HEK293T (cell line): ENCODE measurements at regions of chr15 and their contacts with region 1.

Region 1: GRCh38 chr15:69452692-69453521 is at the start of gene RPLP1:
- DNase-seq: peak; percentile 93

Region 2: DNA sequence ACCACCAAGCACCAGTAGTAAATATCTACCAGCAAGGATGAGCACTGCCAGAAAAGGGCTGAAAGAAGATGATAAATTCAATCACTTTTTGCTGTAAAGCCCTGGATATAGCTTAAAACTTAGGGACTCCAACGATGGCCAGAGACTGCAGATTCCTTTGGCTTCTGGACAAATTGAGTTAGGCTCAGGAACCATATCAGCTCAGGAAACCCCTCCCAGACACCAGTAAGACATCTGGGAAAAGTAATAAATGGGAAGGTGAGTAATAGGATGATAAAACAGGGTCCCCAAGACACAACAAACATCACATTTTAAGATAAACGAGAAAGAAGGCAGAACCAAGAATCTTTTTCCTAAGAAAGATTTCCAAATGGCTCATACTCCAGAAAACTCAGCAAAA is 697.2 kb before region 1 on chr15:
- CTCF ChIA-PET with region 1: no interaction called
- POLR2A ChIA-PET with region 1: no interaction called
- DNase-seq: no peak

Region 3: DNA sequence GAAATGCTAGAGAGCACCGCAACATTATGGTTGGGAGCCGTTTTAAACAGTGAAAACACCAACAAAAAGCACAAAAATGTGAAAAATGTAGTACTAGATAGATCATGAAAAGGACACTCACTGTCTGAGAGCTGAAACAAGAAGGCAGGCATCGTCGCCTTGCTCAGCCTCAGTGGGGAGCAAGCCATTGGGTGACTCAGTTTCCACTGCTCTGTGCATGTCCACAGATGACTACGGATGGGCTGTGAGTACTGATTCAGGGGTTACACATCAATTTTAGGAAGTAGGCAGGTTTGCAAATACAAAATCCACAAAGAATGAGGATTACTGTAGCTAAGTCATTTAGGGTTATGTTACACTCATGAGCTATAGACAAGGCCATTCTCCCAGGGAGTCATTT is 427.6 kb before region 1 on chr15:
- CTCF ChIA-PET with region 1: no interaction called
- POLR2A ChIA-PET with region 1: no interaction called
- DNase-seq: no peak

Region 4: GRCh38 chr15:69435985-69436384 is 16.9 kb before region 1 on chr15:
- CTCF ChIA-PET with region 1: no interaction called
- POLR2A ChIA-PET with region 1: interaction called, 14 read pairs
- DNase-seq: no peak

Region 5: GRCh38 chr15:69468241-69469121 is 15.6 kb after region 1 on chr15:
- CTCF ChIA-PET with region 1: interaction called, 25 read pairs
- POLR2A ChIA-PET with region 1: interaction called, 116 read pairs
- DNase-seq: no peak